Calu3 (cell line): ENCODE measurements at regions of chr2 and their contacts with region 1.

Region 1: DNA sequence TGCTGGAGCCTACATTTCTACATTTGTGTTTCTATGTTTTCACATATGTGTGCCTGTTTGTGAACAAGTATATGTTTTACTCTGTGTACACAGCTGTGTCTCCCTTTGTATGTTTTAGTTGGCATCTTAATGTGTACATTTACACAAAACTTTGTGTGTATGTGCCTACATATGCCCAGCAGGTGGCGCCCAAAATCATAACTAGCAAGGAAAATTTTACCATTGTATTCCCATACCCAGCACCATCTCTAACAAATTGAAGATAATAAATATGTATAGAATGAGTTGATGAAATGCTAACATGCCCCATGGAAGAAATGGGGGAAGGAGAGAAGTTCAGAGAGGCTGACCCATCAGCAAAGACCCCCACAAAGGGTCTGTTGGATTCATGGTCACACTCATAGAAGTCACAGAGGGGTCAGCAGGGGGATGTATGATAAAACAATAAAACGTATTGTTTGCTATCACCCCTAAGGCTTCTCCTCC is 48.1 kb downstream of the PKDCC start:
- DNase-seq: peak; percentile 68
- H3K4me3 Mint-ChIP-seq: no peak overlapping the region
- H3K27ac Mint-ChIP-seq: no peak overlapping the region
- H3K4me1 Mint-ChIP-seq: peaks cover 49% of the 10 kb centered on the region
- H3K27me3 Mint-ChIP-seq: no peaks in the 10 kb centered on the region
- CTCF ChIP-seq: peak; percentile 66

Region 2: DNA sequence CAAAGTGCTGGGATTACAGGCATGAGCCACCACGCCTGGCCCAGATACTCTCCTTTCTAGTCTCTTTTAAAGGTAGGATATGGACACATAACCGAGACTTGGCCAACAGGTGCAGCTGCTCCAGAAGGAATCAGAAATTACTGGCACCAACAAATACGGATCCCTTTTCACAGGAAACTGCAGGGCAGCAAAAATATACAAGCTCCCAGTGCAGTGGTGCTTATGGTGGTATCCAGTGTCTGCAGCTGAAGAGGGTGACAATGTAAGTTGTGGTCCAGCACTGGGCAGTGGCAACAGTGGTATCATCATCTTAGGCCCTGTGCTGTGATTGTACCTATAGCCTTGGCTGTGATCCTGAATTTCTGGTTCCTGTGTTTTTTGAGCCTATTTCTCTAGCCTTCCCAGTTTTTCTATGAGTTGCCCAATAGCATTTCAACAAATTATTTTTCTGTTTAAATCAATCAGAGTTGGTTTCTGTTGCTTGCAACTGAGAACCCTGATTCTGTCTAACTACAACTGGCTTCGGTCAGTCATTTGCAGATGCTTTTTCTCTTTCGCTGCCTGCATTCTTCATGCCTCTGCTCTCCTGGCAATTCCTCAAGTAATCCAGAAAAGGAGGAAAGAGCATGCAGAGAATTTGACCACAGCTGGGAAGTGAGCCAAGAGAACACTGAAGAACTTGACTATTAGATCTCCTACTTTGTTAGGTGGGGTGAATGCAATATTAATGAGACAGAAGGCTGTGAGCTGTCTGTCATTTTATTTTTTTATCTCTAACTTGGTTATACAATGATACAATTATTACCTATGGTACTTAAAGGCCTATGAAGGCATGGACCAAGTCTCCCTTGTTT is 42.4 kb after region 1 on chr2:
- CTCF ChIA-PET with region 1: no interaction called
- intact Hi-C with region 1: loop called (anchors 5 kb)
- DNase-seq: peak; percentile 58
- H3K4me3 Mint-ChIP-seq: no peak overlapping the region
- H3K27ac Mint-ChIP-seq: no peak overlapping the region
- H3K4me1 Mint-ChIP-seq: peaks cover 71% of the 10 kb centered on the region
- H3K27me3 Mint-ChIP-seq: no peaks in the 10 kb centered on the region
- CTCF ChIP-seq: no peak

Region 3: DNA sequence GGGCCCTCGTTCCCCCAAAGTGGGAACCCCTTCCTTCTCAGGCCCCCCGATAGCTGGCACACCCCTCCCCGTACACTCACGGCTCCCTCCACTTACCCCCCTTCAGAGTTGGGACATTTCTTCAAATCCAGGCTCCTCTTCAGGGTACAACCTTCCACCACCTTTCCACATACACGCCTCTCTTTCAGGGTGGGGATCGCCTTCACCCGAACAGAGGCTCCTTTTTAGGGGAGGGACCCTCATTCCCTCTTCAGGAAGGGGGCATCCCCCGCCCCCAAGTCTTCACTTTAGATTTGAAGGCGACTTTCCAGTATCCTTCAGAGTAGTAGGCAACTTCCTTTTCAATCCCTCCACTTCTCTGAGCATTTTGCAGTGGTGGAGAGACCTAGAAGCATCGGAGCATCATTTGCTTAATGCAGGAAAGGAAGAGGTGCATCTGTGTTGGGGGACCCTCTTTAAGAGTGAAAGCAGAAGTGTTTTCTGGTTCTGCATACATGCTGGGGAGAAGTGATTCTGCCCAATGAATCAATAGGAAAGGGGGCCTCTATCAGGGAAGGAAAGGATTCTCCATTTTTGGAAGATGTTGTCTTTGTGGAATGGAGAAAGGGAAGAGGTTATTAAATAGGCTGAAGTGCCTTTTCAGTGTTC is 74.0 kb after region 1 on chr2:
- CTCF ChIA-PET with region 1: no interaction called
- intact Hi-C with region 1: loop called (anchors 2 kb)
- DNase-seq: no peak
- H3K4me3 Mint-ChIP-seq: no peak overlapping the region
- H3K27ac Mint-ChIP-seq: no peak overlapping the region
- H3K4me1 Mint-ChIP-seq: peaks cover 9% of the 10 kb centered on the region
- H3K27me3 Mint-ChIP-seq: no peaks in the 10 kb centered on the region
- CTCF ChIP-seq: no peak

Region 4: DNA sequence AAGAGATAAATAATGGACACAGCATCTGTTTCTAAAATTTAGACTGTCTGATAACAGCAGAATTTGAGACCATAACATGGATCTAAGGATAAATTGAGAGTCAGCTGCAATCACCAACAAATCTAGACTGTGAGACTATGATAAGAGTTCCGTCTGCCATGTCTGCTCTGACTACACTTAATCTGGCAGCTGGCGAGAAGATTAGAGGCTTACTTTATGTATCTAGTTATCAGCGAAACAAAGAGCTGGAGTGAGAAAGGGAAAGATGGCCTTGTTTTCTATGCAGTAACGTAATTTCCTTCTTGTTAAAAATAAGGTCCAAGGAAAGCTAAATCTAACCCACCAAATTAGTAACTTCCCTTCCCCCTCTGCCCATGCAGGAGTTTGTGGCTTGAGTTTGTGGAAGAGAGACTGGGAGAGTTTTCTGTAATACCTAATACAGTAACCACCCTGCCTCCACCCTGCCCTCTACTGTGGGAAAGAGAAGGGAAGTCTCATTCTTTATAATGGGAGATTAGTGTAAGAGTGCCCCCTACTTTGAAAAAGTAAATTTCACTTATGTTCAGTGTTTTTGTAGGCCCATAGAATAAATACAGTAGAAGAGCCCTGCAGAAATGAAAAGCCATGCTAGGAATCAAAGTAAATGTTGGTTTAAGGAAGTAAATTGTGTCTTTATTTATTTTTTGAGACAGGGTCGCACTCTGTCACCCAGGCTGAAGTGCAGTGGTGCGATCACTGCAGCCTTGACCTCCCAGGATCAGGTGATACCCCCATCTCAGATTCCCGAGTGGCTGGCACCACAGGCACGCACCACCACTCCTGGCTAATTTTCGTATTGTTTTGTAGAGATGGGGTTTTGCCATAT is 100.7 kb after region 1 on chr2:
- CTCF ChIA-PET with region 1: interaction called, 7 read pairs
- intact Hi-C with region 1: loop called (anchors 1 kb)
- DNase-seq: peak; percentile 47
- H3K4me3 Mint-ChIP-seq: no peak overlapping the region
- H3K27ac Mint-ChIP-seq: peak overlapping the region; percentile 45
- H3K4me1 Mint-ChIP-seq: peaks cover 62% of the 10 kb centered on the region
- H3K27me3 Mint-ChIP-seq: no peaks in the 10 kb centered on the region
- CTCF ChIP-seq: peak; percentile 47

Region 5: DNA sequence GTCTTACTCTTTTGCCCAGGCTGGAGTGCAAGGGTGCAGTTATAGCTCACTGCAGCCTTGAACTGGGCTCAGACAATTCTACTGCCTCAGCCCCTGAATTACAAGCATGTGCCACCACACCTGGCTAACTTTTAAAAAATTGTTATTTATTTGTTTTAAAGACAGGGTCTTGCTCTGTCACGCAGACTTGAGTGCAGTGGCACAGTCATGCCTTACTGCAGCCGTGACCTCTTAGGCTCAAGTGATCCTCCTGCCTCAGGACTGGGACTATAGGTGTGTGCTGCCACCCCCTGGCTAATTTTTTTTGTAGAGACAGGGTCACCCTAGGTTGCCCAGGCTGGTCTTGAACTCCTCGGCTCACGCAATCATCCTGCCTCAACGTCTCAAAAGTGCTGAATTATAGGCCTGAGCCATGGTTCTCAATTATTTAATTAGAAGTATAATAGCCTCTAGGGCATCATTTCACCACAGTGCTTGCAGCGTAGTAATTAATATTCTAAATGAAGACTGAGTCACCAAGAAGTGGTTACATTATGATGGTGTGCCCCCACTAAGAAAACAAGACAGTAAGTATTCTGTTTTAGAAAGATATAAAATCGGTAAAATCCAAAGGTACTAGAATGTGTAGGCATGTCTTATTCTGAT is 142.8 kb after region 1 on chr2:
- CTCF ChIA-PET with region 1: interaction called, 5 read pairs
- intact Hi-C with region 1: loop called (anchors 1 kb)
- DNase-seq: peak; percentile 63
- H3K4me3 Mint-ChIP-seq: no peak overlapping the region
- H3K27ac Mint-ChIP-seq: no peak overlapping the region
- H3K4me1 Mint-ChIP-seq: peaks cover 47% of the 10 kb centered on the region
- H3K27me3 Mint-ChIP-seq: no peaks in the 10 kb centered on the region
- CTCF ChIP-seq: peak; percentile 48

Region 6: GRCh38 chr2:42328148-42328833 is 232.3 kb after region 1 on chr2:
- CTCF ChIA-PET with region 1: interaction called, 6 read pairs
- intact Hi-C with region 1: loop called (anchors 1 kb)
- DNase-seq: no peak
- H3K4me3 Mint-ChIP-seq: no peak overlapping the region
- H3K27ac Mint-ChIP-seq: no peak overlapping the region
- H3K4me1 Mint-ChIP-seq: no peaks in the 10 kb centered on the region
- H3K27me3 Mint-ChIP-seq: no peaks in the 10 kb centered on the region
- CTCF ChIP-seq: peak; percentile 36